Sigmoid colon (tissue), 7 donors: ENCODE measurements at regions of chr4 and their contacts with region 1.

Region 1: GRCh38 chr4:84493092-84493850 is 5.8 kb downstream of the NKX6-1 start:
- DNase-seq: no peak
- H3K4me3 ChIP-seq: no peak overlapping the region
- H3K27ac ChIP-seq: peak overlapping the region in 1 of 4 donors; percentile 96
- H3K4me1 ChIP-seq: peaks cover 0 to 33% (median 29%) of the 10 kb centered on the region in 4 donors
- H3K27me3 ChIP-seq: peaks cover 64 to 100% (median 90%) of the 10 kb centered on the region in 3 donors
- CTCF ChIP-seq: no peak
- EP300 ChIP-seq: no peak
- POLR2A ChIP-seq: no peak

Region 2: DNA sequence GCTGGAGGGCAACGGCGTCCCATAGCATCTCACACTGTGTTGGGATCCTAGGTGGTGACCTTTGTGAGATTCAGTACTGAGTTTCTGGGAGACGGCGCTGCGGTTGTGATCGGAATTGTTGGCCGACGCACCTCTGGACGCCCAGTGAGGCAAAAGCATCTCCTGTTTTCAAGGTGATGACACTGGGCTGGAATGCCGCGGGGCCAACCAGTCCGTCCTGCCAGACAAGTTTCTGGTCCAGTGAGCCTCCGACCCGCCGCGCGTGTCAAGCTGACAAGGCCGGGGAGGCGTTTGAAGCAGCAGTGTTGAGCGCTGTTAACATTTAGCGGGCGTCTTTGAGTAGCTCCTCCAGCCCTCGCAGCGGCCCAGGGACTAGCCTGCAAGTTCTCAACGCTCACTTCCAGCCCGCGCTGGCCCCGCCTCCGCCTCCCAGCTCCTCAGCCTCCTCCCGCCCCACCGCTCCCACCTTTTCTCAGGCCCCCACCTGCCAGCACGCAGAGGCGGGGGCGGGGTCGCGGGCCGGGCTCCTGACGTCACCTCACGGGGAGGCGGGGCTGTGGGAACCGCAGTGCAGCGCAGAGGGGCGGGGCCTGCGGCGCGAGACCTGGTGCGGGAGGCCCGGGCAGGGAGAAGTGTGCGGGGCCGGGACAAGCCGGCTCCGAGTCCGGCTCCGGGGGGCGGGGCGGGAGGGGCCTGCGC is 89.2 kb after region 1 on chr4:
- intact Hi-C with region 1: loop called (anchors 5 kb)
- DNase-seq: peak; percentile 90
- H3K4me3 ChIP-seq: peak overlapping the region; percentile 48 to 73 (median 62)
- H3K27ac ChIP-seq: peak overlapping the region in 3 of 4 donors; percentile 47 to 82 (median 53)
- H3K4me1 ChIP-seq: peaks cover 0 to 19% (median 15%) of the 10 kb centered on the region in 4 donors
- H3K27me3 ChIP-seq: peaks cover 2 to 38% (median 4%) of the 10 kb centered on the region in 3 donors
- CTCF ChIP-seq: no peak
- EP300 ChIP-seq: no peak
- POLR2A ChIP-seq: peak in 1 of 2 donors; percentile 40